ENCODE measurements at regions of chr11 and their contacts with region 1.

Region 1: DNA sequence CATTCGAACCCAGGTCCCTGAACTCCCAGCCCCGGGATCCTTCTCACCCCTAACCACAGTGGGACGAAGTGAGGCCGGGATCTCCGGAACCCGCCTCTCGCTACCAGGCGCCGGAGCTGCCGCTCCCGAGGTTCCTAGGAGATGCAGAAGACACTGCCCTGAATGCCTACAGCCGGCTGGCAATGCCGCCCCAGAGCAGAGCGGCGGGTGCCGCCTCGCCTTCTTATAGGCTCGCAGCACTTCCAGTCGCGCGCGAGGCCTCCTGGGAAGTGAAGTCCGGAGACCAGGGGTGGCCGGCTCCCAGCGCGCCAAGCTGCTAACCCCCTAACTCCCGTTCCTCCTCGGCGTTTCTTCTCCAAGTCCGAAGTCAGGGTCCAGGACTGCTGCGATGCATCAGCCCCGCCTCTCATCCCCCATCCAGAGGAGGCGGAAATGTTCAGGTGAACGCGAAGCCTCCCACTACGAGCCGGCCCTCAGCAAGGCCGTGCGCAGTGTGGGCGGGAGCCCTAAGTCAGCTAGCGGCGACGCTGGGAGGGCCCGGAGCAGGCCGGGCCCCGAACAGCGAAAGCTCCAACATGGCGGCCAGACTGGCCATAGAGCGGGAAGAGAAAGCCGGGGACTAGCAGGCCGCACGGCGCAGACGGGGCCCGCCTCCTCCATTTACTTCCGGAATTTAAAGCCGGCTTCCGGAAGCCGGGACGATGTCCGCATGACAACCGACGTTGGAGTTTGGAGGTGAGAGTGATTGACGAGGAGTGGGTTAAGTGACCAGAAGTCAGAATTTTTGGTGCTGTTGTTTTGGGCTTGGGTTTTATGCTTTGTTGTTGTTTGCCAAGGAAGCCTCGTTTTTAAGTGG is at the starts of genes CYB561A3 and TMEM138:
- DNase-seq: peak; percentile 87 to 96 (median 94)
- H3K4me3 ChIP-seq: peak within 1 kb of the TSS; percentile 52 to 98 (median 83)
- H3K27ac ChIP-seq: peak within 1 kb of the TSS; percentile 95 to 100 (median 100)
- H3K27me3 ChIP-seq: no peaks in the 10 kb centered on the region
- CTCF ChIP-seq: peak in 22 of 56 donors; percentile 7 to 54 (median 20)
- total RNA-seq, gene CYB561A3: 7.2 to 29.3 (median 19.0) TPM
- total RNA-seq, gene TMEM138: 18.4 to 51.8 (median 31.7) TPM

Region 2: DNA sequence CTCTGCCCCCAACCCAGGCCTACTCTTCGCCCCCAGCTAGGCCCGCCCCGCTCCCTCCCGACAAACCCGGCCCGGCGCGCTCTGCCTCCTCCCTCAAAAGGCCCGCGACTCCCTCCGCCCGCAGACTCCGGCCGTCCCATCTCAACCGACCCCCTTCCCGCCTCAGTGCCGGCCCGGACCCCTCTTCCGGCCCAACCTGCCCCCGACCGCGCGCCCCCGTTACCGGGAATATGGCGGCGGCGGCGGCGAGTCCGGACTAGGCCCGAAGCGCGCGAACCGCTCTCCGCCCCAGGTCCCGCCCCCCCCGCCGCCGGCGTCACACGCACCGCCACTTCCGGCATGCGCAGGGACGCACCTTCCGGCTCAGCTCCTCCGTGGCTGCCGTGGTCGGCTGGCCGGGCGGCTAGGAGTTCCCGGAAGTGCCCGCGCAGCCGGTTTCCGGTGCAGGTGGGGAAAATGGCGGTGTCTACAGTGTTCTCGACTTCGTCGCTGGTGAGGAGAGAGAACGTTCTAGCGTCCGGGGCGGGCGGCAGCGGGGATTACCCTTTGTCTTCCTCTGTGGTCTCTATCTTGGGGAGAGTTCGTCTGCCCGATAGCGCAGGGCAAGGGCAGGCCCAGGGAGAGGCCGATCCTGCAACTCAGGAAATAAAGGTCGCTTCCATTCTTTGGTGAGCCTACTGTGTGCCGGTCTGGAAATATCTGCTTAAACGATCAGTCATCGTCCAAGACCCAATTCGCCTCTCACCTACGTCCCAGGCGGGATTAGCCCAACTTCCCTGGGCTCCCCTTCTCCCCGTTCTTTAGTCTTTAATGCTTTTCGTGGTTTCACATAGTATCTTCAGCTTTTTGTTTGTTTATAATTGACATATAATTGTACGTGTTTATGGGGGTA is 68.0 kb after region 1 on chr11 and contains the starts of genes CPSF7 and SDHAF2:
- intact Hi-C with region 1: loop called (anchors 1 to 2 kb)
- DNase-seq: peak; percentile 91 to 99 (median 96)
- H3K4me3 ChIP-seq: peak within 1 kb of the TSS; percentile 73 to 100 (median 92)
- H3K27ac ChIP-seq: peak within 1 kb of the TSS; percentile 69 to 97 (median 92)
- H3K27me3 ChIP-seq: no peaks in the 10 kb centered on the region
- CTCF ChIP-seq: peak in 19 of 56 donors; percentile 2 to 52 (median 15)
- total RNA-seq, gene CPSF7: 73.7 to 125 (median 93.7) TPM
- total RNA-seq, gene SDHAF2: 23.9 to 53.9 (median 37.5) TPM

Region 3: GRCh38 chr11:61447601-61448551 is 86.0 kb after region 1 on chr11:
- intact Hi-C with region 1: no loop called
- DNase-seq: peak in 1 of 10 donors; percentile 39
- H3K4me3 ChIP-seq: peak overlapping the region in 9 of 59 donors; percentile 2 to 25 (median 11)
- H3K27ac ChIP-seq: peak overlapping the region in 58 of 59 donors; percentile 35 to 98 (median 86)
- H3K27me3 ChIP-seq: no peaks in the 10 kb centered on the region
- CTCF ChIP-seq: no peak